Mammary epithelial cell (primary cell): ENCODE measurements at regions of chr13 and their contacts with region 1.

Region 1: GRCh38 chr13:106038752-106039151 is 496.7 kb downstream of the EFNB2 start:
- DNase-seq: peak; percentile 88
- H3K4me3 ChIP-seq: no peak overlapping the region
- H3K27ac ChIP-seq: peak overlapping the region; percentile 14
- H3K4me1 ChIP-seq: peaks cover 6% of the 10 kb centered on the region
- H3K27me3 ChIP-seq: no peaks in the 10 kb centered on the region
- CTCF ChIP-seq: no peak

Region 2: DNA sequence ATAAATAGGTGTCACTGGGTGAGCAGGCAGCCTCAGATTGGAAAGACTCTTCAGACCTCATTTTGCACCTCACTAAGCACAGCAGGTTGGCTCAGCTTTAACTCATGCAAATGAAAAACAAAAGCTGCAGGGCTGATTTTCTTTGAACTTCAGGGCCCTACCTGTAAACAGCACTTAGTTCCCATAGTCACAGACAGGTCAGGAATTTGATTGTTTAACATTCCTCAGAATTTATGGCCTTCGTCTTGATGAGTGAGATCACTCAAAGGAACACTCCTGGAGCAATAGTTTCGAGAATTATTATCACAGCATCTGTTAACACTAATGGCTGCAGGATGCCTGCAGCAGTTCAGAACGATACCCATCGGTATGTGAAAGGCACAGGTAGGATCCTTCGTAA is 221.7 kb before region 1 on chr13:
- CTCF ChIA-PET with region 1: no interaction called
- dilution Hi-C with region 1: no loop called
- in situ Hi-C with region 1: no loop called
- intact Hi-C with region 1: loop called (anchors 5 kb)
- DNase-seq: peak; percentile 15
- H3K4me3 ChIP-seq: no peak overlapping the region
- H3K27ac ChIP-seq: no peak overlapping the region
- H3K4me1 ChIP-seq: peaks cover 18% of the 10 kb centered on the region
- H3K27me3 ChIP-seq: no peaks in the 10 kb centered on the region
- CTCF ChIP-seq: no peak